ENCODE measurements at regions of chr11 and their contacts with region 1.

Region 1: GRCh38 chr11:62880803-62881578 is at the start of gene SLC3A2:
- DNase-seq: peak; percentile 89
- H3K4me3 Mint-ChIP-seq: peak within 1 kb of the TSS; percentile 98
- H3K27ac Mint-ChIP-seq: peak within 1 kb of the TSS; percentile 100
- H3K4me1 Mint-ChIP-seq: peaks cover 53% of the 10 kb centered on the region
- H3K27me3 Mint-ChIP-seq: no peaks in the 10 kb centered on the region
- total RNA-seq, gene SLC3A2: 153 to 157 TPM

Region 2: GRCh38 chr11:62753736-62754603 is 127.0 kb before region 1 on chr11 and contains the start of gene ZBTB3:
- CTCF ChIA-PET with region 1: interaction called, 12 read pairs
- POLR2A ChIA-PET with region 1: interaction called, 3 read pairs
- DNase-seq: peak; percentile 99
- H3K4me3 Mint-ChIP-seq: peak within 1 kb of the TSS; percentile 92
- H3K27ac Mint-ChIP-seq: peak within 1 kb of the TSS; percentile 95
- H3K4me1 Mint-ChIP-seq: peaks cover 27% of the 10 kb centered on the region
- H3K27me3 Mint-ChIP-seq: no peaks in the 10 kb centered on the region
- total RNA-seq, gene ZBTB3: 14.3 to 18.5 TPM

Region 3: DNA sequence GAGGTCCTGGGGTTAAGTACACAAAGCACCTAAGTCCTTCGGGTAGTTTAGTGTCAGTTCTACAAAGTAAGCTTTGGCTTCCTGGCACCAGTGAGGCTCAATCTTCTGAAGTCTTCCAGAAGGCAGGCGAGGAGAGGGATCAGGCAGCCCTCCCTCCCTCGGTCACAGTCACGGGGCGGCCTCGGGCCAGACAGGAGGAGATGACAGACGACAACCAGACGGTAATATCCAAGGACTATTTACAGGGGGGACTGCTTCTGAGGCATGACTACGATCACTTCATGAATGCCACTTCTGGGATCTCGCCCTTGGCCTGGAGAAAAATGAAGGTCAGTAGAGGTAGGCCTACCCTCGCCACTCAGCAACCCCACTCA is 88.8 kb before region 1 on chr11:
- CTCF ChIA-PET with region 1: interaction called, 27 read pairs
- POLR2A ChIA-PET with region 1: no interaction called
- DNase-seq: no peak
- H3K4me3 Mint-ChIP-seq: peak overlapping the region; percentile 87
- H3K27ac Mint-ChIP-seq: peak overlapping the region; percentile 88
- H3K4me1 Mint-ChIP-seq: peaks cover 48% of the 10 kb centered on the region
- H3K27me3 Mint-ChIP-seq: no peaks in the 10 kb centered on the region

Region 4: GRCh38 chr11:62841361-62842184 is 39.4 kb before region 1 on chr11:
- CTCF ChIA-PET with region 1: no interaction called
- POLR2A ChIA-PET with region 1: interaction called, 17 read pairs
- DNase-seq: peak; percentile 93
- H3K4me3 Mint-ChIP-seq: no peak overlapping the region
- H3K27ac Mint-ChIP-seq: no peak overlapping the region
- H3K4me1 Mint-ChIP-seq: peaks cover 16% of the 10 kb centered on the region
- H3K27me3 Mint-ChIP-seq: no peaks in the 10 kb centered on the region

Region 5: DNA sequence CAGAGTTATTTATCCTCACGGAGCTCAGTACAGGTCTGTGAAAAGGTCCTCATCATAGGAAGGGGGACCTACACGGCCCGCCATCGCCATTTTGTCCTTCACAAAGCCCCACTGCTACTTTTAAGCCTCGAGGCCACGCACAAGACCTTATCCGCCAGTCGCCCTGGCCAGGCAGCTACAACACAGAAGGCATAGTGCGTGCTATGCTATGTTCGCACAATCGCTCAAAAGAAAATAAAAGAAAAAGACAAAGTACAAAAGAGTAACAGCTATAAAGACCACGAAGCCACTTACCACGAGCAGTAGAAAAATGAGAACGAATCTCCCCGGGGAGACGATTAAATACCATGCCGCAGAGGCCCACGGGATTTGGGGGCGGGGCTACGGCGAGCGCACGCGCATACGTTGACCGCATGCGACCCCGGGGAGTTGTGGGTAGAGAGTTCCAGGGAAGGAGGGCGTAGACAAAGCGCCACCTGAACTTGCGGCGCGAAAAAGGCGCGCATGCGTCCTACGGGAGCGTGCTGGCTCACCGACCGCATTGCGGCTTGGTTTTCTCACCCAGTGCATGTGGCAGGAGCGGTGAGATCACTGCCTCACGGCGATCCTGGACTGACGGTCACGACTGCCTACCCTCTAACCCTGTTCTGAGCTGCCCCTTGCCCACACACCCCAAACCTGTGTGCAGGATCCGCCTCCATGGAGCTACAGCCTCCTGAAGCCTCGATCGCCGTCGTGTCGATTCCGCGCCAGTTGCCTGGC is 25.2 kb before region 1 on chr11:
- CTCF ChIA-PET with region 1: interaction called, 35 read pairs
- POLR2A ChIA-PET with region 1: interaction called, 13 read pairs
- DNase-seq: peak; percentile 98
- H3K4me3 Mint-ChIP-seq: peak overlapping the region; percentile 95
- H3K27ac Mint-ChIP-seq: peak overlapping the region; percentile 99
- H3K4me1 Mint-ChIP-seq: peaks cover 65% of the 10 kb centered on the region
- H3K27me3 Mint-ChIP-seq: no peaks in the 10 kb centered on the region

Region 6: DNA sequence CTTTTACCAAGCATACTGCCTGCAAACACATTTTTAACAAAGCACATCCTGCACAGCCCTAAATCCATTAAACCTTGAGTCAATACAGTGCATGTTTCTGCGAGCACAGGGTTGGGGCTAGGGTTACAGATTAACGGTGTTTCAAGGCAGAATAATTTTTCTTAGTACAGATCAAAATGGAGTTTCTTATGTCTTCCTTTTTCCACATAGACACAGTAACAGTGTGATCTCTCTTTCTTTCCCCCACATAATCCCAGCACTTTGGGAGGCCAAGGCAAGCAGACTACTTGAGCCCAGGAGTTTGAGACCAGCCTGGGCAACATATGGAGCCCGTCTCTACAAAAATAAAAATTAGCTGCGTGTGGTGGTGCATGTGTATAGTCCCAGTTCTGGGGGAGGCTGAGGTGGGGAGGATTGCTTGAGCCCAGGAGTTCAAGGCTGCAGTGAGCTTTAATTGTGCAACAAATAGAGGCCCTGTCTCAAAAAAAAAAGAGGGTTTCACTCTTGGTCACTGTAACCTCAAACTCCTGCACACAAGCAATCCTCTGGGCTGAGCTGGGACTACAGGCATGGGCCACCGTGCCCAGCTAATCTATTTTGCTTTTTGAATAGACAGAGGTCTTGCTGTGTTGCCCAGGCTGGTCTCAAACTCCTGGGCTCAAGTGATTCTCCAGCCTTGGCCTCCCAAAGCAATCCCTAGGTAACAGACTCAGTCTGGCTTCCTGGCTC is 20.0 kb before region 1 on chr11:
- CTCF ChIA-PET with region 1: interaction called, 35 read pairs
- POLR2A ChIA-PET with region 1: interaction called, 12 read pairs
- DNase-seq: no peak
- H3K4me3 Mint-ChIP-seq: no peak overlapping the region
- H3K27ac Mint-ChIP-seq: peak overlapping the region; percentile 74
- H3K4me1 Mint-ChIP-seq: peaks cover 57% of the 10 kb centered on the region
- H3K27me3 Mint-ChIP-seq: no peaks in the 10 kb centered on the region

Region 7: GRCh38 chr11:62905927-62906531 is 25.0 kb after region 1 on chr11:
- CTCF ChIA-PET with region 1: interaction called, 26 read pairs
- POLR2A ChIA-PET with region 1: interaction called, 3 read pairs
- DNase-seq: peak; percentile 83
- H3K4me3 Mint-ChIP-seq: no peak overlapping the region
- H3K27ac Mint-ChIP-seq: no peak overlapping the region
- H3K4me1 Mint-ChIP-seq: peaks cover 17% of the 10 kb centered on the region
- H3K27me3 Mint-ChIP-seq: peaks cover 11% of the 10 kb centered on the region

Measured in activated CD4-positive, alpha-beta T cell treated with anti-CD3 and anti-CD28 coated beads, Interleukin-2, amount 10 ng/mL, durations not matched to agents 7 days and 5 days (primary cell).